CD8-positive, alpha-beta T cell (primary cell): ENCODE measurements at regions of chr5 and their contacts with region 1.

Region 1: DNA sequence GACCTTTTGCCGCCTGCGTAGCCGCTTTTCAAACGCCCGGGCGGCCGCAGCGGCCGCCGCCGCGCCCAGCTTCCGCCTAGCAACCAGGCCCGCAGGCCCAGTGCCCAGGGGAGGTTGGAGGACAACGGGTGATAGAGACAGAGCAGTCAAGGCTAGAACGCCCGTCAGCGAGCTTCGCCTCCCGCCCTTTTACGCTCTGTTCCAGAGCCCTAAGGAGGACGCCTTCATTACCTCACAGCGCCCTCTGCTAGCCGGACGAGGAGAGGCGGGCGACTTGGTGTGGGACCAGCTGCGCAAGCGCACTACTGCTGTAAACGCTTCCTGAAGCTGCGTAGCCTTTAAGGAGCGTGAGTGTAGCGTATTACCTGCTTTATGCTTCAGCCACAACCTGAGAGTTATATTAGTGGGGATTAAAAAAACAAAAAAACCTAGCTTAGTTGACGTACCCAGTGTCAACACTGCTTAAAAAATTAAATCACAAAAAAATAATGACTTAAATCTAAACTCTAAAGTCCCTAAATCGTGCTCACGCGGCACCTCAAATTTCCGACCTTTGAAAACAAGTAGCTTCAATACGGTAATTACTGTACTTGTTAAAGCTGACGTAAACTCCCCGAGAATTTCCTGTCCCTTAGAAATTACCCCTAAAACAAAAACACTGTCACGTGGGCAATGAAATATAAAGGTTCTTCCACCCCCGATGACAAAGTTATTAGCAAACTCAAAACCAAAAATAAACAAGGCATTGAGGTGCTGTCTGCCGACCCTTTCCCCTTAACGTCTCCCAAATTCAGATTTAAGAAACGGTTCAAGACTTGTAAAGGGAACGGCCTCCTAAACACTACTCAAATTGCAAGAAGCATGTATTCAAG is at the start of gene CEP120:
- DNase-seq: peak; percentile 95 to 100 (median 97)
- ATAC-seq: peak; percentile 91
- H3K4me3 ChIP-seq: peak within 1 kb of the TSS; percentile 67 to 79
- H3K4me3 Mint-ChIP-seq: no peak within 1 kb of the TSS
- H3K27ac ChIP-seq: peak within 1 kb of the TSS; percentile 98
- H3K27ac Mint-ChIP-seq: no peak within 1 kb of the TSS
- H3K4me1 ChIP-seq: peaks cover 32% of the 10 kb centered on the region
- H3K4me1 Mint-ChIP-seq: peaks cover 17% of the 10 kb centered on the region
- H3K27me3 ChIP-seq: no peaks in the 10 kb centered on the region
- H3K27me3 Mint-ChIP-seq: no peaks in the 10 kb centered on the region
- CTCF ChIP-seq: peak; percentile 67
- total RNA-seq, gene CEP120: 63.6 to 69.1 TPM

Region 2: DNA sequence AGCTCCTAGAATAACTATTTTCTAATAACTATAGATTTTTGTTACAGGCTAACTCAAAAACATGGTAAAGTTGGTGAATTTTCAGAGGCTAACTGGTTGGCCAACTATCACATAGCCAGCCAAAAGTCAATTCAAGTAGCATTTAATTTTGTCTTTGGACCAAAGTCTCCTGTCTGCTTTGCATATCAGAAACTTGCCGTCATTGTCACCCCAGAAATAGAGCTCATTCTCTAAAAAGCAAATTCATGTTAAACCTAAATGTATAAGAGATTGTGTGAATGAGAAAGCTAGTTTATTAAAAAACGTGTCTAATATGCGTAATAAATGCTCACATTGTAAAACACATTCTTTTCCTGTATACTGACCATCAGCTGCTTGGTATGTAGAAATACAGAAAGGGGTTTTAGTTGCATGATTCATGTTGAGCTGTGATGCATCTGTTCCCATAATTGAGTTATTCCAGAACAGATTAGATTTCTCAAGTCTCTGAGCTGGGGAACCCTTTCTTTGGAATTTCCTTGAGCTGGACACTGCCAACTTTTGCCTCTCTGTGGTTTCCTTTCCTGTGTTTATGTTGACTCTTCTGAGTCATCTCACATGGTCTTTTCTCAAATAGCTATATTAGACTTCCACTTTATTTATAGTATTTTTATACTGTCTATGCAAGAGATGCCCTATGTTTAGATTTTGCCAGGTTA is 1454.5 kb before region 1 on chr5:
- CTCF ChIA-PET with region 1: no interaction called
- POLR2A ChIA-PET with region 1: no interaction called
- intact Hi-C with region 1: loop called in 1 of 2 experiments (anchors 5 kb)
- DNase-seq: no peak
- ATAC-seq: no peak
- H3K4me3 ChIP-seq: no peak overlapping the region
- H3K4me3 Mint-ChIP-seq: no peak overlapping the region
- H3K27ac ChIP-seq: no peak overlapping the region
- H3K27ac Mint-ChIP-seq: no peak overlapping the region
- H3K4me1 ChIP-seq: no peaks in the 10 kb centered on the region
- H3K4me1 Mint-ChIP-seq: peaks cover 43% of the 10 kb centered on the region
- H3K27me3 ChIP-seq: no peaks in the 10 kb centered on the region
- H3K27me3 Mint-ChIP-seq: no peaks in the 10 kb centered on the region
- CTCF ChIP-seq: no peak

Region 3: DNA sequence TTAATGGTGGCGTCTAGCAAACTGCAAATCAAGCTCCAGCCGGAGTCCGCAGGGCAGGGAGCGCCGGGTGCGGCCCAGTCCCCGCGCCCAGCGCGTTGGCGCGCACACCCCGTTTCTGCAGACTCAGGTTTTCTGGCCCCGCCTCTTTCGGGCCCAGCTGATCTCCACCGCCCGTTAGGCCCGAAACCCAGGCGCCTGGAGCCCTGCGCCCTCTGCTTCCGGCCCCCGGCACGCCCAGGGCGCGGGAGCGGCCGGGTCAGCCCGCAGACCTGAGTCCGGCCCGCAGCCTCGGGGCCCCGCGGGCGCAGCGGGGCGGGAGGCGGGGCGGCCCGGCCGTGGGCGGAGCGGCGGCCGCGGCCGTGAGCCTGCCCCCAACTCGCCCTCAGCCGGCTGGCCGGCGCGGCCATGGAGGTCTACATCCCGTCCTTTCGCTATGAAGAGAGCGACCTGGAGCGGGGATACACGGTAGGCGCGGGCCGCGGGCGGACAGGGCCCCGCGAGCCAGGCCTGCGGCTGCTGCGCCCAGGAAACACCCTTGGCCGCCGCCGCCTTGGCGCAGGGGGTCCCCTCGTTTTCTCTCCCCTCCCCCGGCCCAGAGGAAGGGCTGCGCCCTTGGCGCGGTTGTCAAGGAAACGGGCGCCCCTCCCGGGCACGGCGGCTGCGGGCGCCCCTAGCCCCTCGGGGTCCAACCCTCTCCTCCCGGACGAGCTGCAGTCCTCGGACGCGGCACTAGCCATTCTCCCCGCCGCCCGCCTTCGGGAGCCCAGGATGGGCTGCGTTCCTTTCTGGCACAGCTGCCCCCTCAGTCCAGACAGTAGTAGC is 578.1 kb before region 1 on chr5 and contains the start of gene SNX24:
- CTCF ChIA-PET with region 1: no interaction called
- POLR2A ChIA-PET with region 1: interaction called, 8 read pairs
- intact Hi-C with region 1: loop called (anchors 5 to 10 kb)
- DNase-seq: peak; percentile 31 to 86 (median 70)
- ATAC-seq: peak; percentile 83
- H3K4me3 ChIP-seq: peak within 1 kb of the TSS; percentile 62 to 67
- H3K4me3 Mint-ChIP-seq: peak within 1 kb of the TSS; percentile 90
- H3K27ac ChIP-seq: peak within 1 kb of the TSS; percentile 35 to 71
- H3K27ac Mint-ChIP-seq: peak within 1 kb of the TSS; percentile 79
- H3K4me1 ChIP-seq: peaks cover 11% of the 10 kb centered on the region
- H3K4me1 Mint-ChIP-seq: peaks cover 27% of the 10 kb centered on the region
- H3K27me3 ChIP-seq: no peaks in the 10 kb centered on the region
- H3K27me3 Mint-ChIP-seq: peaks cover 9% of the 10 kb centered on the region
- CTCF ChIP-seq: no peak
- total RNA-seq, gene SNX24: 0.33 to 0.87 TPM

Region 4: GRCh38 chr5:123511648-123512605 is 88.4 kb after region 1 on chr5 and contains the start of gene CSNK1G3:
- CTCF ChIA-PET with region 1: interaction called, 7 read pairs
- POLR2A ChIA-PET with region 1: interaction called, 77 read pairs
- intact Hi-C with region 1: loop called (anchors 1 kb)
- DNase-seq: peak; percentile 80 to 96 (median 91)
- ATAC-seq: peak; percentile 80
- H3K4me3 ChIP-seq: peak within 1 kb of the TSS; percentile 89 to 93
- H3K4me3 Mint-ChIP-seq: peak within 1 kb of the TSS; percentile 99
- H3K27ac ChIP-seq: peak within 1 kb of the TSS; percentile 77 to 87
- H3K27ac Mint-ChIP-seq: peak within 1 kb of the TSS; percentile 98
- H3K4me1 ChIP-seq: peaks cover 33% of the 10 kb centered on the region
- H3K4me1 Mint-ChIP-seq: peaks cover 42% of the 10 kb centered on the region
- H3K27me3 ChIP-seq: no peaks in the 10 kb centered on the region
- H3K27me3 Mint-ChIP-seq: peaks cover 2% of the 10 kb centered on the region
- CTCF ChIP-seq: no peak
- total RNA-seq, gene CSNK1G3: 98.1 to 99.9 TPM

Region 5: GRCh38 chr5:123610665-123611405 is 187.3 kb after region 1 on chr5:
- CTCF ChIA-PET with region 1: interaction called, 8 read pairs
- POLR2A ChIA-PET with region 1: interaction called, 15 read pairs
- intact Hi-C with region 1: loop called (anchors 2 to 5 kb)
- DNase-seq: peak in 3 of 9 experiments; percentile 28 to 77 (median 70)
- ATAC-seq: peak; percentile 76
- H3K4me3 ChIP-seq: no peak overlapping the region
- H3K4me3 Mint-ChIP-seq: no peak overlapping the region
- H3K27ac ChIP-seq: no peak overlapping the region
- H3K27ac Mint-ChIP-seq: peak overlapping the region; percentile 87
- H3K4me1 ChIP-seq: no peaks in the 10 kb centered on the region
- H3K4me1 Mint-ChIP-seq: peaks cover 3% of the 10 kb centered on the region
- H3K27me3 ChIP-seq: no peaks in the 10 kb centered on the region
- H3K27me3 Mint-ChIP-seq: no peaks in the 10 kb centered on the region
- CTCF ChIP-seq: peak; percentile 99